Gastrocnemius medialis (tissue), 4 donors: ENCODE measurements at regions of chr6 and their contacts with region 1.

Region 1: DNA sequence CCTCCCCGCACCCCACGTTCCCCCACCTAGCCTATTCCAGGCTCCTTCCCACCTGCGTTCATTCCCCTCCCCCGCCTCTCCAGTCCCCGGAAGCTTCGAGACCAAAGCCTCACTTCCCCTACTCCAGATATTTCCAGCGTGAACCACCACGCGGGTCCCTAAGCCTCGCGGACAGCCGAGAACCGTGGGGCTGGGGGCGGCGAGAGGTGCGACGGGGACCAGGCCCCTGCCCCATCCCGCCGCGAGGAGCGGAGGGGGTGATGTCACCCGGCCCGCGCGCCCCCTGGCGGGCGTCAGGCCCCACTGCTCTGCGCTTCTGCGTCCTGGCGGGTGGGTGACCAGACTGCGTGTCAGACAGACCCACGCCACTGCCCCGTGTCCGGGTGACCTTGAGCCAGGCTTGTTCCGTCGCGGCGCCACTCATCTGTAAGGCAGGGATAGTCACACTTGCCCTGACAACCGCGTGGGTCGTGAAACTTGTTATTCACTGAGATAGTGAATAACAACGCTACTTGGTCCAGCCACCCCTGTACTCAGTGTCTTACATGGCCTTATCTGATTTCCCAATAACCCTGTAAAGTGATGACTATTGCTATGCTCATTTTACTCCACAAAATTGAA is 9.0 kb upstream of the HSP90AB1 start:
- DNase-seq: peak; percentile 57 to 83
- ATAC-seq: peak; percentile 71 to 74
- H3K4me3 ChIP-seq: peak overlapping the region; percentile 68 to 83 (median 74)
- H3K27ac ChIP-seq: peak overlapping the region; percentile 95 to 99 (median 98)
- H3K4me1 ChIP-seq: peaks cover 35 to 42% of the 10 kb centered on the region in 2 donors
- H3K27me3 ChIP-seq: no peaks in the 10 kb centered on the region
- CTCF ChIP-seq: peak; percentile 95 to 100 (median 99)
- POLR2A ChIP-seq: peak; percentile 61 to 71

Region 2: GRCh38 chr6:44104481-44105021 is 133.4 kb before region 1 on chr6:
- in situ Hi-C with region 1: loop called in 1 of 4 experiments (anchors 25 kb)
- intact Hi-C with region 1: loop called (anchors 5 kb)
- DNase-seq: no peak
- ATAC-seq: peak; percentile 27 to 43
- H3K4me3 ChIP-seq: no peak overlapping the region
- H3K27ac ChIP-seq: peak overlapping the region; percentile 88 to 100 (median 95)
- H3K4me1 ChIP-seq: peaks cover 55 to 67% of the 10 kb centered on the region in 2 donors
- H3K27me3 ChIP-seq: no peaks in the 10 kb centered on the region
- CTCF ChIP-seq: no peak
- POLR2A ChIP-seq: no peak

Region 3: DNA sequence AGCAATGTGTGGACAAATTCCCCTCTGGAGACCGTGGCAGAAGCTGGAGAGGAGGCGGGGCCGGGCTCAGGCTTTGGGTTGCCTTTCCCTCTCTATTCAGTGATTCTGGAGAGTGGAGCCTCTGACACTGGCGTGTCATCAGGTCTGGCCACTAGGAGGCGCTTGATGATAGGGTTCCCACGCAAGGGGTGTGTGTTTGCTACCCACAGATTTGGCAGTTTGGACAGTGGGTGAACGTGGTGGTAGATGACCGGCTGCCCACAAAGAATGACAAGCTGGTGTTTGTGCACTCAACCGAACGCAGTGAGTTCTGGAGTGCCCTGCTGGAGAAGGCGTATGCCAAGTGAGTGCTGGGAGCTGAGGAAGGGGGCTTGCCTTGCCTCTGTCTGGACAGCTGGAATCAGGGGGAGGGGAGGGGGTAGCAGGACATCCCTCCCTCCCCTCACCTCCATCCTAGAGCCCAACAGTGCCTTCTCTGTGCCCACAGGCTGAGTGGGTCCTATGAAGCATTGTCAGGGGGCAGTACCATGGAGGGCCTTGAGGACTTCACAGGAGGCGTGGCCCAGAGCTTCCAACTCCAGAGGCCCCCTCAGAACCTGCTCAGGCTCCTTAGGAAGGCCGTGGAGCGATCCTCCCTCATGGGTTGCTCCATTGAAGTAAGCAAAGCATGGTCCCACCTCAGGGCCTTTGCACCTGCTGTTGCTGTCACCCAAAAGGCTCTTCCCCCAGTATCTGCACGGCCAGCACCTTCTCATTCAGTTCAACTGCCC is 65.0 kb before region 1 on chr6:
- in situ Hi-C with region 1: loop called in 3 of 4 experiments (anchors 5 to 10 kb)
- intact Hi-C with region 1: loop called (anchors 1 kb)
- DNase-seq: peak; percentile 65 to 80
- ATAC-seq: peak; percentile 95 to 96
- H3K4me3 ChIP-seq: no peak overlapping the region
- H3K27ac ChIP-seq: no peak overlapping the region
- H3K4me1 ChIP-seq: peaks cover 0 to 7% of the 10 kb centered on the region in 2 donors
- H3K27me3 ChIP-seq: no peaks in the 10 kb centered on the region
- CTCF ChIP-seq: peak; percentile 85 to 96 (median 92)
- POLR2A ChIP-seq: no peak

Region 4: DNA sequence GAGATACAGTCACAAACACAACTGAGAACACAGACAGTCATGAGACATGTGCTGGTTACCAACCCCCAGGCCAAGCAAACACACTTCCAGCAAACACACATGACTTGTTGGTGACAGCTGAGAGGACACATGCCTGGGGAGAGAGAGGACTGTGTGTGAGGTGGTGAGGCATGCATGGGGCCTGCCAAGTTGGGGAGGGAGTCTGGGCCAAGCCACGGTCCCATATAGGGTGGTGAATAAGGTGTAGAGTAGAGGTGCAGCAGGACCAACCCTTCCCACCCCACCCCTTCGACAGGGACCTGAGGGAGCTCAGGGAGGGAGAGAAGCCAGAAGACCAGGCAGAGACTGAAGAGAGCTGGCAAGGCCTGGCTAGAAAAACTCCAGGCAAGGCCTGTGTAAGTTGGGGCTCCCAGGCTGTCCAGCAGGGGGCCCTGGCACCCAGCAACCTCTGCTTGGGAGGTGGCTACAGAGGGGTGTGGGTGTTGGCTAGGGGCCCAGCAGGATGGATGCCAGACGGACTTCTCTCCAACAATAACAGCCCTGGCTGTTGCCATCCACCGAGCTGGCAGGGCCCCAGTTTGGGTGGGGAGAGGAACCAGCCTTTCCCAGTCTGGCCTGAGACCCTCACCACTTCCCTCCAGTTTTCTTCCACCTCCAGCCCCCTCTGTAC is 16.5 kb before region 1 on chr6:
- in situ Hi-C with region 1: no loop called
- intact Hi-C with region 1: loop called (anchors 1 kb)
- DNase-seq: peak; percentile 94 to 96
- ATAC-seq: peak; percentile 77 to 79
- H3K4me3 ChIP-seq: peak overlapping the region in 2 of 4 donors; percentile 21 to 62
- H3K27ac ChIP-seq: peak overlapping the region; percentile 95 to 99 (median 98)
- H3K4me1 ChIP-seq: peaks cover 71 to 88% of the 10 kb centered on the region in 2 donors
- H3K27me3 ChIP-seq: no peaks in the 10 kb centered on the region
- CTCF ChIP-seq: peak; percentile 51 to 89 (median 72)
- POLR2A ChIP-seq: peak; percentile 49 to 58

Region 5: DNA sequence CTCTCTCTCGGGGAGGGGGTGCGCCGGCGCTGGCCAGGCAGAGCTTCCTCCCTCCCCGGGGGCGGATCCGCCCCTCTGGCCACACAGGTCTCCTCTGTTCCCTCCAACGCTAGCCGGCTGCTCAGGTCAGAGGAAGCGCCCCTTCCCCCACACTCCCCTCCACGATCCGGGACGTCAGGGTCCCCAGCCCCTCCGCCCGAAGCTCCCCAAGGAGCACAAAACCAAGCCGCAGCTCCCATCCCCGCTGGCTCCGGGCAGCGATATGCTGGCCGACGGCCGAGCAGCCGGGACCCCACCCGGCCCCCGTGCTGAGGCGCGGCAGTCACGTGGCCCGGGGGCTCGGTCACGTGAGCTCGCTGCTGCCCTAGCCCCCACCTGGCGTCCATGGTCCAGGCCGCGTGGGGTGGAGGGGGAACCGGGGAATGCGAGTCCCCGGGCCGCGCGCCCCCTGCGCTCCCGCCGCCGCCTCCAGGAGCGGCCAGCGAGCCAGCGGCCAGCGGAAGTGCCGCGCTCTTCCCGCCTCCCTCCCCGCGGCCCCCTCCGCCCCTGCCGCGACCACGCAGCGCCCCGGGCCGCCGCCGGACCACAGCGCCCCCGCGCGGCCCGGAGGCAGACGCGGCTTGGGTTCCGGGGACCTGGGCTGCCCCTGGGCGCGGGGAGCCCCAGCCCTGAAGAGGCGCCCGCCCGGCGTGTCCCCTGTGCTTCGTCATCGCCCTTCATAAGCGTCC is 19.3 kb after region 1 on chr6 and contains the start of gene SLC35B2:
- in situ Hi-C with region 1: no loop called
- intact Hi-C with region 1: loop called (anchors 1 kb)
- DNase-seq: peak in 1 of 2 donors; percentile 58
- ATAC-seq: peak; percentile 73 to 81
- H3K4me3 ChIP-seq: peak within 1 kb of the TSS; percentile 77 to 99 (median 88)
- H3K27ac ChIP-seq: peak within 1 kb of the TSS; percentile 87 to 97 (median 92)
- H3K4me1 ChIP-seq: peaks cover 8 to 12% of the 10 kb centered on the region in 2 donors
- H3K27me3 ChIP-seq: no peaks in the 10 kb centered on the region
- CTCF ChIP-seq: peak; percentile 54 to 99 (median 90)
- POLR2A ChIP-seq: peak; percentile 75 to 77
- total RNA-seq, gene SLC35B2: 14.9 to 35.9 (median 21.4) TPM

Region 6: GRCh38 chr6:45021676-45022075 is 783.8 kb after region 1 on chr6:
- in situ Hi-C with region 1: no loop called
- intact Hi-C with region 1: no loop called
- DNase-seq: no peak
- ATAC-seq: no peak
- H3K4me3 ChIP-seq: no peak overlapping the region
- H3K27ac ChIP-seq: no peak overlapping the region
- H3K4me1 ChIP-seq: no peaks in the 10 kb centered on the region
- H3K27me3 ChIP-seq: no peaks in the 10 kb centered on the region
- CTCF ChIP-seq: no peak
- POLR2A ChIP-seq: no peak